ENCODE measurements at regions of chr1 and their contacts with region 1.

Region 1: GRCh38 chr1:39538588-39539465 is 37.8 kb downstream of the PABPC4 start:
- DNase-seq: peak; percentile 73
- H3K4me3 ChIP-seq: no peak overlapping the region
- H3K27ac ChIP-seq: no peak overlapping the region
- H3K4me1 ChIP-seq: peaks cover 19% of the 10 kb centered on the region
- CTCF ChIP-seq: peak; percentile 99

Region 2: GRCh38 chr1:39268112-39268581 is 270.7 kb before region 1 on chr1:
- CTCF ChIA-PET with region 1: no interaction called
- POLR2A ChIA-PET with region 1: no interaction called
- intact Hi-C with region 1: loop called (anchors 5 kb)
- DNase-seq: no peak
- H3K4me3 ChIP-seq: no peak overlapping the region
- H3K27ac ChIP-seq: no peak overlapping the region
- H3K4me1 ChIP-seq: peaks cover 64% of the 10 kb centered on the region
- CTCF ChIP-seq: no peak

Region 3: DNA sequence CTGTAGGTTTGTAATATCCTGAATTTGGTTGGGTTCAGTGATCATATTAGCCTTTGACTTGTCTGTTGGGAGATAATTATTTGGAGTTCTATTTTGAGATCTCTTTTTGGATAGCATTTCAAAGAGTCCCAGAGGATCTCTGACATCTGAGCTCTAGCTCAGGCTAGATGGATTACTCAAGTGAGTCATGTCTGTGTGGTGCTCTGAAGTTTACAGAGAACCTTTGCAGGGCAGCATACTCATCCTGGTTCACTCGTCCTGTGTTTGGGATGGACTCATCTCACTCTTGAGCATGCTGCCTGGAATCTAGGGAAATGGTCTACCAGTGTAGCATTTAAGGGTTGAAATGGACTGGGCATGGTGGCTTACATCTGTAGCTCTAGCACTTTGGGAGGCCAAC is 76.8 kb before region 1 on chr1:
- CTCF ChIA-PET with region 1: no interaction called
- POLR2A ChIA-PET with region 1: no interaction called
- intact Hi-C with region 1: loop called (anchors 5 kb)
- DNase-seq: no peak
- H3K4me3 ChIP-seq: no peak overlapping the region
- H3K27ac ChIP-seq: no peak overlapping the region
- H3K4me1 ChIP-seq: no peaks in the 10 kb centered on the region
- CTCF ChIP-seq: no peak

Region 4: DNA sequence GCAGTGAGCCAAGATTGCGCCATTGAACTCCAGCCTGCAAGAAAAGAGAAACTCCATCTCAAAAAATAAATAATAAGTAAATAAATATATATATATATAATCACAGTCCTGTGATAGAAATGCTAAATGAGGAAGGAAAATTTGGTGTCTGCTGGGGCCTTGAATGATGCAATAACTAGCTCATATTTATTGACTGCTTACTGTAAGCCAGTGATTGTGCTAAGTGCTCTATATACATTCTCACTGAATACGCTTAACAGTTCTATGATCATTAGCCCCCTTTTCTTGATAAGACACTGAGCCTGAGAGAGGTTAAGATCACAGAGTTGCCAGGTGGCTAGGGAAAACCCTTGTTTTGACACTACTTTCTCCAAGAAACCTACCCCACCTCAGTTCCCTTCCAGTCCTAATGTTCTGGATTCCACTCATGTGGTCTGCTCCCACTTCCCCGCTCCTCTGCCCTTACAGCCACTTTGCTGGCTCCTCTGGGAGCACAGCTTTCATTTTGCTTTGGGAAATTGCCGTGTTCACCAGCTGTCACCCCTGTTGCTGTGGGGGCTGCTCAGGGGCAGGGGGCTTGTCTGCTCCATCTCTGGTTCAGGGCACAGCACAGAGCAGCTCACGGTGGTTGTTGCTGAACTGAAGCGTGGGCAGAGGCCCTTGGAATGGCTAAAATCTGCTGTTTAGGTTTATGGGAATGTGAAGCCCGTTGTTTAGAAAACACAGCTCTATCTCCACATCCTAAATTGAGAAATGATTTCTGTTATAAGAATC is 49.8 kb before region 1 on chr1:
- CTCF ChIA-PET with region 1: no interaction called
- POLR2A ChIA-PET with region 1: no interaction called
- intact Hi-C with region 1: loop called (anchors 10 kb)
- DNase-seq: no peak
- H3K4me3 ChIP-seq: no peak overlapping the region
- H3K27ac ChIP-seq: no peak overlapping the region
- H3K4me1 ChIP-seq: peaks cover 7% of the 10 kb centered on the region
- CTCF ChIP-seq: no peak

Region 5: DNA sequence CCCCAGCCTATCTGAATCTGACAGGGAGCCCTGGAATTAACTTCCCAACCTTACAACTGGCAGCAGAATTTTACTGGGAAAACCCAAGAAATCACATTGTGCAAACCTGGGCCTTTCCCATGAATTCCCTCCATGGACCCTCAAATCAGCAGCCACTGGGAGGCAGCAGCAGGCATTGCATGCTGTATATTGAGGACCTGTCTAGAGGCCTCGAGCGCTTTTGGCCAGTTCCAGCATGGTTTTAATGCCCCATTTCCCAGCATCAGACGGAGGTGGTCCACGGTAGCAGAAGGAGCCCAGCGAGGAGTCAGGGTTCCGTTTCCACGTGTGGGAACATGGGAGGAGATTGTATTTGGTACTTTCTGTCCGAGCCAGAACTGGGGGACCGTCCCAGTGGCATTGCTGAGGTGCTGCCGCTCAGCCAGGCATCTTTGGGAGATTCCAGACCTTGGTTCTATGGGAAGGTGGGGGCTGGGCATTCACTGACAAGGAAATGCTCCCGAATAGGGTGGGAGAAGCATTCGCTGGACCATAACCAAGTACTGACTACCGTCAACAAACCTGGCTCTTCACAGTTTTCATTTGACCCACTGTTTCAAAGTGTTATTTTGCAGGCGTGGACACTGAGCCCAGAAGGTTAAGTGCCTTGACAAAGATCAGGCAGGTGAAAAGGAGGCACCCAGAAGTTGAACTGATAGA is 31.4 kb before region 1 on chr1:
- CTCF ChIA-PET with region 1: interaction called, 5 read pairs
- POLR2A ChIA-PET with region 1: no interaction called
- intact Hi-C with region 1: loop called (anchors 2 kb)
- DNase-seq: peak; percentile 23
- H3K4me3 ChIP-seq: no peak overlapping the region
- H3K27ac ChIP-seq: no peak overlapping the region
- H3K4me1 ChIP-seq: peaks cover 21% of the 10 kb centered on the region
- CTCF ChIP-seq: peak; percentile 65

Measured in OCI-LY7 (cell line).